ENCODE measurements at regions of chr11 and their contacts with region 1.

Region 1: DNA sequence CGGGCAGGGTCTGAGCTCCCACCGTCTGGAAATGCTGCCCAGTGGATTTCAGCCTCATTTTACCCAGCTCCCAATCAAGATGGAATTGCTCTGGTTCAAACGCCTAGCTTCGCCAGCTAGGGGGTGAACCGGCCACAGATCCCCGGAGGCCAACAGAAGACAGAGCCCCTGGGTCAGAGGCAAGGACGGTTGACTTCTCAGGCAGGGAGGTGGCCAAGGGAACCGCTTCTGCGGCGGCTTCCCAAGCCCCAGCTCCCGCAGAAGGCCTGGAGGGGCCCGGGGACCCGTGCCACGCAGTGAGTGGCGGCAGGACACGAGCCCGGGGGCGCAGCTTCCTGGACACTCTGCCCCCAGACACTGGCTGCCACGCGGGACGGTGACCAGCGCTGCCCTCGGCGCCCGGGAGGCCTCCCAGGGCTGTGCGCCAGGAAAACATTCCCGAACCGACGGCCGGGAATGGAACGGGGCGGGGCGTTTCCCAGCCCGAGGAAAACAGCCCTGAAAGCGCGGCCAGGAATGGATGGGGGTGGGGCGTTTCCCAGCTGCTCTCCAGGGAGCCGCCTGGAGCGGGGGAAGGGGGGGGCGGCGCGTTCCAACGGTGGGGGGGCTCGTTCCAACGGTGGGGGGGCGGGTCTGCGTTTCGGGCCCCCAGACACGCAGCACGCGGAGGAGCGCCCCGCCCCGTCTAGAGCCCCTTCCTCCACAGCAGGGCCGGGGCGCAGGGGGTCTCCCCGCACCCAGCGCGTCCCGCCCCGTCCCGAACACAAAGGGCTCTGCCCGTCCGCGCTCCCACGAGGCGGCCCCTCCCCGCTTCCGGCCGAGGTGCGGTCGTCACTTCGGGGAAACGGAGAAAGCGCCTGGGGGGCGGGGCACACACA is 13.5 kb upstream of the B4GALNT4 start:
- DNase-seq: peak; percentile 66 to 90
- H3K4me3 ChIP-seq: peak overlapping the region in 3 of 4 experiments; percentile 3 to 47 (median 22); a peak in 5 of 8 replicates
- H3K27ac ChIP-seq: peak overlapping the region; percentile 84
- H3K4me1 ChIP-seq: peaks cover 4 to 8% (median 6%) of the 10 kb centered on the region in 4 experiments
- H3K27me3 ChIP-seq: no peaks in the 10 kb centered on the region; a peak in 1 of 7 replicates
- CTCF ChIP-seq: no peak
- EP300 ChIP-seq: 0 out of 3 replicates have a peak, but pooled peaks of 1 of the 2 experiments have one; percentile 57
- POLR2A ChIP-seq: peak in 1 of 2 experiments; percentile 71; a peak in 2 of 3 replicates
- RAD21 ChIP-seq: peak in 1 of 2 experiments; percentile 6; a peak in 2 of 4 replicates

Region 2: DNA sequence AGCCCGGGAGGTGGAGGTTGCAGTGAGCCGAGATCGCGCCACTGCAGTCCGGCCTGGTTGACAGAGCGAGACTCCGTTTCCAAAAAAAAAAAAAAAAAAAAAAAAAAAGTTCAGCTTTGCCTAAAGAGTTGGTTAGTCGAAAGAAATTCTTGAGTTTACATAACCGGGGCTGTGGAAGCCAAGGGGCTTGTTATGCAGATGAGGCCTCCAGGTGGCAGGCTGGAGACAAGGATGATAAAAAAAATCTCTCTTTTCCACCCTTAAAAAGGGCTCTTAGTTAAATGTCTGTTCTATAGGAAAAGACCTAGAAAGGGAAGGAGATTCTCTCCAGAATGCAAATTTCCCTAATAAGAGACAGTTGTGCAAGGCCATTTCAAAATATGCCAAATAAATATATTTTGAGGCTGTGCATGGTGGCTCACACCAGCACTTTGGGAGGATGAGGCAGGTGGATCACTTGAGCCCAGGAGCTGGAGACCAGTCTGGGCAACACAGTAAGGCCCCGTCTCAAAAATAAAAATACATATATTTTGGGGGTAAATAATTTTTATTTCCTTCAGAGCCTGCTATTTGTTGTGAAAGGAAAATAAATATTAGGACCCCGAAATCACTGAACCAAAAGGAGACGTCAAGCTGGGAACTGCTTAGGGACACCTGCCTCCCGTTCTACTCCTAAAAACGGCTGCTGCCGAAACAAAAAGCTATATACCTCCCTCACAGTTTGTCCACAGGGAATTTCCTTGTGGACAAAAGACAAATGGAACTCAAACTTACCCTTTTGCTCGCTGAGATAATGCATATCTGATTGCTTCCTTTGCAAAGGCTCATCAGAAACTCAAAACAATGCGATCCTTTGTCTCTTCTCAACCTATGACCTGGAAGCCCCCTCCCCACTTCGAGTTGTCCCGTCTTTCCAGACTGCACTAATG is 50.6 kb before region 1 on chr11:
- CTCF ChIA-PET with region 1: interaction called, 11 read pairs
- POLR2A ChIA-PET with region 1: interaction called, 15 read pairs
- DNase-seq: no peak
- H3K4me3 ChIP-seq: peak overlapping the region in 2 of 4 experiments; percentile 3 to 42; a peak in 2 of 8 replicates
- H3K27ac ChIP-seq: peak overlapping the region; percentile 31; the same call in 1 of the 2 replicates
- H3K4me1 ChIP-seq: peaks cover 17 to 46% (median 33%) of the 10 kb centered on the region in 4 experiments
- H3K27me3 ChIP-seq: no peaks in the 10 kb centered on the region; a peak in 1 of 7 replicates
- CTCF ChIP-seq: peak; percentile 19 to 44 (median 31); a peak in 3 of 4 replicates
- EP300 ChIP-seq: no peak
- POLR2A ChIP-seq: no peak
- RAD21 ChIP-seq: peak; percentile 34 to 39

Region 3: GRCh38 chr11:313787-314547 is 41.9 kb before region 1 on chr11 and contains the start of gene IFITM1:
- CTCF ChIA-PET with region 1: interaction called, 26 read pairs
- POLR2A ChIA-PET with region 1: interaction called, 9 read pairs
- DNase-seq: peak in 1 of 2 experiments; percentile 57
- H3K4me3 ChIP-seq: peak within 1 kb of the TSS; percentile 71 to 94 (median 86)
- H3K27ac ChIP-seq: peak within 1 kb of the TSS; percentile 43; the same call in 1 of the 2 replicates
- H3K4me1 ChIP-seq: peaks cover 9 to 41% (median 31%) of the 10 kb centered on the region in 4 experiments
- H3K27me3 ChIP-seq: no peaks in the 10 kb centered on the region
- CTCF ChIP-seq: no peak
- EP300 ChIP-seq: no peak
- POLR2A ChIP-seq: no peak
- RAD21 ChIP-seq: no peak
- total RNA-seq, gene IFITM1: 394 and 417 TPM in 2 replicates

Region 4: DNA sequence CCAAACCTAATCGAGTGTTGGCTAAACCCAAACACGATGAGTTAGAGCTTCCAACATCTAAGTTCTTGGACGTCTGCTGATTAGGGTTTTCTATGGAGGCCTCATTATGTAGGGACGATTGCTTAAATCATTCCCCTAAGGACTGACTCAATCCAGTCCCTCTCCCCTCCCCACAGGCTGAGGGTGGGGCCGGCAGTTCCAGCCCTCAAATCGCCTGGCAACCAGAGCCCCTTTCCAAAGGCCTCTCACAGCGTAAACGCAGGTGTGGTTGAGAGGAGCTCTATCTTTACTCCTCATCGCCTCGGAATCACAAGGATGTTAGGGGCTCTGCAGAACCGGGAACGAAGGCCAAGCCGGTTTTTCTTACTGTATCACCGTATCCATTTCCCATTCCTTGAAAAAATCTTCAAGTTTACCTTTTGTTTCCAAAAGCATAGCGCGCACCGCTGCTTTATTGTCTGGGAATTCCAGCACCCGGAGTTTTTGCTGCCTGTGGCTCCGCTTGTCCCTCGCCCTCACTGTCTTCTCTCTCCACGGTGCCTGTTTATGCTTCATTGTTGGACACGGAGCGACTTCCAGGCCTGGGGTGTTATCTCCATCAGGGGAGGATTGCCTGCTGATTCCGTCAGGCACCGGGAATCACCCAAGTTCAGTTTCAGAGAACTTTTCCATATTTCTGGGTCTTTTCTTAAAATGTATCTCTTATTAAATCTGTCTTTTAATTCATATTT is 21.4 kb before region 1 on chr11:
- CTCF ChIA-PET with region 1: interaction called, 16 read pairs
- POLR2A ChIA-PET with region 1: interaction called, 24 read pairs
- DNase-seq: peak in 1 of 2 experiments; percentile 74
- H3K4me3 ChIP-seq: peak overlapping the region in 3 of 4 experiments; percentile 7 to 39 (median 23); a peak in 5 of 8 replicates
- H3K27ac ChIP-seq: peak overlapping the region; percentile 76
- H3K4me1 ChIP-seq: peaks cover 7 to 25% (median 18%) of the 10 kb centered on the region in 4 experiments
- H3K27me3 ChIP-seq: no peaks in the 10 kb centered on the region
- CTCF ChIP-seq: no peak
- EP300 ChIP-seq: no peak
- POLR2A ChIP-seq: peak in 1 of 2 experiments; percentile 70; a peak in 2 of 3 replicates
- RAD21 ChIP-seq: no peak

Region 5: DNA sequence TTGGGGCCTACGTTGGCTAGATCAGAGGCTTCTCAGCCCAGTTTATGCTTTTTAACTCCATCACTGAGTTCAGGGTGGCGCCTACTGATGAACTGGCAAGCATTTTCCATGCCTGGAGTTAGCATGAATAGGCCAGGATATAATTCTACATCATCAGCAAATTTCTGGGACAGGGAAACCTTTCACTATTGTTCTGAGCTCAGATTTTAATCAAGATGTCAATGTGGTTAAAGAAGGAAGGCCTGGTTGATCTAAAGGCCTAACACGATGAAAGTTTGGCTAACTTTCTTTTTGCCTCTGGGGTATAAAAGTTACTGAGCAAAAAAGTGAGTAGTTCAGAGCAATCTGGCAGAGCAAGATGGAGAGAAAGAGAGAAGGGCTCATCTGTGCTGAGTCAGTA is 13.5 kb before region 1 on chr11:
- CTCF ChIA-PET with region 1: interaction called, 16 read pairs
- POLR2A ChIA-PET with region 1: interaction called, 24 read pairs
- DNase-seq: no peak
- H3K4me3 ChIP-seq: no peak overlapping the region
- H3K27ac ChIP-seq: no peak overlapping the region
- H3K4me1 ChIP-seq: peaks cover 0 to 14% (median 9%) of the 10 kb centered on the region in 4 experiments; a peak in 5 of 7 replicates
- H3K27me3 ChIP-seq: no peaks in the 10 kb centered on the region
- CTCF ChIP-seq: no peak
- EP300 ChIP-seq: no peak
- POLR2A ChIP-seq: no peak
- RAD21 ChIP-seq: no peak